ENCODE measurements at regions of chr5 and their contacts with region 1.

Region 1: DNA sequence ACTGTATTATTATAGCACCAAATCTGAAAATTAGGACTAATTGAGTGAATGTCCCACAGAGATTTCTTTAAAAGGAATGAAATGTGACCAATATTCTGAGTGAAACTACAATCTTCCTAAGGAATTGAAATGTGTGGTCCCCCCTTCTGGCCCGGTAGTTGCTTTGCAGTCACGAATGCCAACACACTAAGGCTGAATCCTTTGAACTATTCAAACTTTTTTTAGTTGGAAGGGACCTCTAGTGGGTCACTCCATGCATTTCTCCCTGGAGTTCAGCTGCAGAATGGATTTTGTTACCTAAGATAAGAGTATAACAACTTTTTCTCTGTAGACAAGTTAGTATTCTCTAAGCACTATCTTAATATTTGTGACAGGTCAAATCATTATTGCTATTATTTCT is 2.8 kb downstream of the CDH6 start:
- DNase-seq: no peak
- H3K4me3 Mint-ChIP-seq: no peak overlapping the region
- H3K27ac Mint-ChIP-seq: no peak overlapping the region
- H3K4me1 Mint-ChIP-seq: peaks cover 18% of the 10 kb centered on the region
- H3K27me3 Mint-ChIP-seq: peaks cover 43% of the 10 kb centered on the region
- CTCF ChIP-seq: no peak

Region 2: DNA sequence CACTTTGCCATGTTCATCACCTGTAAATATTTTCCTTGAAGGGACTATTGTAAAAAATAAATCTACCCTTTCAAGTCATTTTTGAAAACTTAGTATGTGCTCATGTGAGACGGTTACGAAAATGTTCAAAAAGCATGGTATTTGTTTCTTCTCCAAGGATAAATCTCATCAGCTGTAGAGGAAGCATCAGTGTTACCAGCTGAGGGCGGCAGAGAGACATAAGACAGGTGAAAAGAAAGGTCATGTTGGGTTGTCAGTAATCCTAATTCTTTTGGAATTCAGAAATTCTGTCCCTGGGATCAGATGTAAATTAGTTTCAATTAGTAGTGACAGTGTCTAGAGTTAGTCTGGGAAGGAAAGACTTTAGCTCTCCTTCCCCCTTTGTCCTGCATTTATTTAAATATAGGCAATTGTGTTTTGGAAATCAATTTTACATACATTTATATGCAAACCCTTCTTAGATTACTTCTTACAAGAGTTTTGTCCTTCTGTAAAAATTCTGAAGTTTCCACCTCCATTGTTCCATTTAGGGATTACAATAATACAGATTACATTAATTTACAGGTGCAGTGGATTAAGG is 794.7 kb before region 1 on chr5:
- CTCF ChIA-PET with region 1: no interaction called
- intact Hi-C with region 1: loop called (anchors 5 kb)
- DNase-seq: peak; percentile 54
- H3K4me3 Mint-ChIP-seq: no peak overlapping the region
- H3K27ac Mint-ChIP-seq: no peak overlapping the region
- H3K4me1 Mint-ChIP-seq: no peaks in the 10 kb centered on the region
- H3K27me3 Mint-ChIP-seq: no peaks in the 10 kb centered on the region
- CTCF ChIP-seq: no peak

Measured in Calu3 (cell line).